ENCODE measurements at regions of chr22 and their contacts with region 1.

Region 1: GRCh38 chr22:25598609-25599008 is 34.1 kb downstream of the GRK3 start:
- H3K4me3 Mint-ChIP-seq: no peak overlapping the region
- H3K27ac Mint-ChIP-seq: no peak overlapping the region
- H3K4me1 Mint-ChIP-seq: peaks cover 59% of the 10 kb centered on the region
- H3K27me3 Mint-ChIP-seq: no peaks in the 10 kb centered on the region

Region 2: GRCh38 chr22:25525376-25525775 is 73.2 kb before region 1 on chr22:
- intact Hi-C with region 1: no loop called
- H3K4me3 Mint-ChIP-seq: no peak overlapping the region
- H3K27ac Mint-ChIP-seq: no peak overlapping the region
- H3K4me1 Mint-ChIP-seq: no peaks in the 10 kb centered on the region
- H3K27me3 Mint-ChIP-seq: no peaks in the 10 kb centered on the region

Region 3: DNA sequence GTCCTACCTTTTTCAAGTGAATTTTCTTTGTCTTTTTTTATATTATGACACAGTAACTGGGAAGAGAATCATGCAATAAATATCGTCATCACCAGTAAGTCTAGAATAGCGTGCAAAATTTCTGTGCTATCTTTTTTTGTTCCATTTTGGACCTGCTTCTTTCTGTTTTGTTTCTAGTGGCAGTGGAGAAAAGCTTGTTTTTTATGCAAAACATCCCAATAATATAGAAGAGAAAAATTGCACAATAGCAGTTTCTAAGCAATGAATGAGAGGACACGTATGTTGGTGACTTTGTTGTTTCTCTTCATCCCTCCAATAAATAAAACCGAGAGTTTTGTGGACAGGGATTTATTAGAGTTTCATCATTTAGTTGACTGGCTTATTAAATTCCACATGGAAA is 23.9 kb before region 1 on chr22:
- intact Hi-C with region 1: loop called (anchors 1 kb)
- H3K4me3 Mint-ChIP-seq: no peak overlapping the region
- H3K27ac Mint-ChIP-seq: no peak overlapping the region
- H3K4me1 Mint-ChIP-seq: peaks cover 70% of the 10 kb centered on the region
- H3K27me3 Mint-ChIP-seq: no peaks in the 10 kb centered on the region

Region 4: GRCh38 chr22:25630447-25630846 is 31.8 kb after region 1 on chr22:
- intact Hi-C with region 1: no loop called
- H3K4me3 Mint-ChIP-seq: no peak overlapping the region
- H3K27ac Mint-ChIP-seq: no peak overlapping the region
- H3K4me1 Mint-ChIP-seq: peaks cover 20% of the 10 kb centered on the region
- H3K27me3 Mint-ChIP-seq: no peaks in the 10 kb centered on the region

Measured in dendritic cell treated with granulocyte-macrophage colony-stimulating factor and Interleukin-4, amounts not matched to agents 40 ng/mL and 50 ng/mL, for 4 days (primary cell).